Activated CD4-positive, alpha-beta T cell treated with anti-CD3 and anti-CD28 coated beads for 36 hours (primary cell): ENCODE measurements at regions of chr20 and their contacts with region 1.

Region 1: GRCh38 chr20:62302341-62303058 is at the start of gene ADRM1:
- DNase-seq: peak; percentile 98
- ATAC-seq: peak; percentile 83
- H3K4me3 Mint-ChIP-seq: peak within 1 kb of the TSS; percentile 91
- H3K27ac Mint-ChIP-seq: peak within 1 kb of the TSS; percentile 99
- H3K4me1 Mint-ChIP-seq: peaks cover 22% of the 10 kb centered on the region
- H3K27me3 Mint-ChIP-seq: no peaks in the 10 kb centered on the region
- total RNA-seq, gene ADRM1: 92.8 to 103 TPM

Region 2: DNA sequence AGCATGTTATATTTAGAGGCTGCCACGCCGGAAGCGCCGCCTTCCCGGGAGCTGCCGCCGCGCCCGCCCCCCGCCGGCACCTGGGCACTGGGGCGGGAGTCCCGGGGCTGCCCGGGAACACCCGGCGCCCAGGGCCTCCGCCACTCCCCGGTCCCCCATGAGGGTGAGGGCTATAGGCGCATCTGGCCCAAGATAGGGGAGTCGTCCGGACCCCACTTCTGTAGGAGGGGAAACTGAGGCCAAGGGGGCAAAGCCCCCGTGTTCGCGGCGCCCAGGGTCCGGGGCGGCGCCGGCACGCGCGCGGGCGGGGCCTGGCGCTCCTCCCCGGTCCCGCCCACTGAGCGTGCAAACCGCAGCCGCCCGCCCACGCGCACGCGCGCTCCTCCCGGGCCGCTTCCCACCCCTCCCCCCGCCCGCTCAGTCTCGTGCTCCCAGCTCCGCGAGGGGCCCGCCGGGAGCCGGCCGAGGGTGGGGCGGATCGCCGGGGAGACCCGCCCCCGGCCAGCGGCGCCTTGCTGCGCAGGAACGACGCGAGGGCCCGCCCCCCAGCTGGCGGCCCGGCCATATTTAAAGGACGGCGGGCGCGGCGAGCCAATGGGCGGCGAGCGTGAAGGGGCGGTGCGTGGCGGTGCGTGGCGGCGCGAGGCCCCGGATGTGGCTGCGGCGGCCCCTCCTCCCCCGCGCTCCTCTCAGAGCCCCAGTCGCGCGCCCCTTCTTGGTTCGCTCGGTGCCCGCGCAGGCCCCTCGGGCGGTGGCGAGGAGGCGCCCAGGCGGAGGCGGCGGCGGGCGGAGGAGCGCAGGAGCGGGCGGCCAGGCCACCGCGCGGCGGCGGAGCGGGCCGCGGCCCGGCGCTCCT is 180.5 kb before region 1 on chr20 and contains the start of gene LSM14B:
- CTCF ChIA-PET with region 1: no interaction called
- POLR2A ChIA-PET with region 1: no interaction called
- intact Hi-C with region 1: loop called in 1 of 2 experiments (anchors 1 kb)
- DNase-seq: peak; percentile 99
- ATAC-seq: peak; percentile 84
- H3K4me3 Mint-ChIP-seq: peak within 1 kb of the TSS; percentile 80
- H3K27ac Mint-ChIP-seq: peak within 1 kb of the TSS; percentile 91
- H3K4me1 Mint-ChIP-seq: peaks cover 54% of the 10 kb centered on the region
- H3K27me3 Mint-ChIP-seq: no peaks in the 10 kb centered on the region
- total RNA-seq, gene LSM14B: 38.7 TPM

Region 3: DNA sequence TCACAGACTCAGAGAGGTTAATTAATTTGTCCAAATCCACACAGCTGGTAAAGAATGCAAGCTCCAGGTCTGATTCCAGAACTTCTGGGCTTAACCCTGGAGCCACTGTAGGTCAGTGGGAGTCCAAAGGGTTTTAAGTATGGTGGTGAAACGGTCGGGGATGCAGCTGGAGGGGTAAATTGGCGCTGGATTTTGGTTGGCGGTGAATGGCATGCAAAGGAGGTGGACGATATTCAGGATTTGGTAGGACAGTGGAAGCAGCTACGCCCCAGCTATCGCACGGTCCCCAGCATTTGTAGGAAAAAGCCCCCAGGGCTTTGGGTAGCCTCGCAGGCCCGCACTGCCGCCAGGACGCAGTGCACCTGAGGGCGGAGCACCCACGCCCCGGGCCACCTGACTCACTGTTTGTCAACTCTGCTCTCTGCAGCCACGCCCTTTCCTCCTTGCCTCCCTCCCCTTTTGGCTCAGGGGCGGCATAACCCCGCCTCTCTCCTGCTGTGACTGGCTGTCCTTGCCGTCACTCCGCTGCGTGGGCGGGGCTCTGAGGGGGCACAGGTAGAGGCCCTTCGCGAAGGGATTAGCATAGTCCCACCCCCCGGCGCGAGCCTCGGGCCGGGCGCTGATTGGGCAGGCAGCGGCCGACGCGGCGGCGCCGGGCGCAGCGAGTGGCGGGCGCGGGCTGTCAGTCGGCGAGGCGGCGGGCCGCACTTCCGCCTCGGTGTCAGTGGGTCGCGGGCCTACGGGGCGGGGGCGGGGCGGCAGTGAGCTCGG is 64.5 kb before region 1 on chr20 and contains the start of gene OSBPL2:
- CTCF ChIA-PET with region 1: no interaction called
- POLR2A ChIA-PET with region 1: no interaction called
- intact Hi-C with region 1: loop called (anchors 1 kb)
- DNase-seq: peak; percentile 100
- ATAC-seq: peak; percentile 99
- H3K4me3 Mint-ChIP-seq: peak within 1 kb of the TSS; percentile 77
- H3K27ac Mint-ChIP-seq: peak within 1 kb of the TSS; percentile 74
- H3K4me1 Mint-ChIP-seq: peaks cover 34% of the 10 kb centered on the region
- H3K27me3 Mint-ChIP-seq: no peaks in the 10 kb centered on the region
- total RNA-seq, gene OSBPL2: 19.2 to 23.0 TPM

Region 4: GRCh38 chr20:62407221-62407992 is 104.9 kb after region 1 on chr20 and contains the start of gene CABLES2:
- CTCF ChIA-PET with region 1: interaction called, 3 read pairs
- POLR2A ChIA-PET with region 1: no interaction called
- intact Hi-C with region 1: loop called in 1 of 2 experiments (anchors 1 kb)
- DNase-seq: peak; percentile 96
- ATAC-seq: peak; percentile 93
- H3K4me3 Mint-ChIP-seq: peak within 1 kb of the TSS; percentile 72
- H3K27ac Mint-ChIP-seq: peak within 1 kb of the TSS; percentile 82
- H3K4me1 Mint-ChIP-seq: peaks cover 23% of the 10 kb centered on the region
- H3K27me3 Mint-ChIP-seq: peaks cover 2% of the 10 kb centered on the region
- total RNA-seq, gene CABLES2: 6.4 to 7.6 TPM

Region 5: GRCh38 chr20:62476056-62476838 is 173.7 kb after region 1 on chr20:
- CTCF ChIA-PET with region 1: no interaction called
- POLR2A ChIA-PET with region 1: no interaction called
- intact Hi-C with region 1: no loop called
- DNase-seq: peak; percentile 27
- ATAC-seq: peak; percentile 12
- H3K4me3 Mint-ChIP-seq: no peak overlapping the region
- H3K27ac Mint-ChIP-seq: no peak overlapping the region
- H3K4me1 Mint-ChIP-seq: no peaks in the 10 kb centered on the region
- H3K27me3 Mint-ChIP-seq: peaks cover 34% of the 10 kb centered on the region

Region 6: DNA sequence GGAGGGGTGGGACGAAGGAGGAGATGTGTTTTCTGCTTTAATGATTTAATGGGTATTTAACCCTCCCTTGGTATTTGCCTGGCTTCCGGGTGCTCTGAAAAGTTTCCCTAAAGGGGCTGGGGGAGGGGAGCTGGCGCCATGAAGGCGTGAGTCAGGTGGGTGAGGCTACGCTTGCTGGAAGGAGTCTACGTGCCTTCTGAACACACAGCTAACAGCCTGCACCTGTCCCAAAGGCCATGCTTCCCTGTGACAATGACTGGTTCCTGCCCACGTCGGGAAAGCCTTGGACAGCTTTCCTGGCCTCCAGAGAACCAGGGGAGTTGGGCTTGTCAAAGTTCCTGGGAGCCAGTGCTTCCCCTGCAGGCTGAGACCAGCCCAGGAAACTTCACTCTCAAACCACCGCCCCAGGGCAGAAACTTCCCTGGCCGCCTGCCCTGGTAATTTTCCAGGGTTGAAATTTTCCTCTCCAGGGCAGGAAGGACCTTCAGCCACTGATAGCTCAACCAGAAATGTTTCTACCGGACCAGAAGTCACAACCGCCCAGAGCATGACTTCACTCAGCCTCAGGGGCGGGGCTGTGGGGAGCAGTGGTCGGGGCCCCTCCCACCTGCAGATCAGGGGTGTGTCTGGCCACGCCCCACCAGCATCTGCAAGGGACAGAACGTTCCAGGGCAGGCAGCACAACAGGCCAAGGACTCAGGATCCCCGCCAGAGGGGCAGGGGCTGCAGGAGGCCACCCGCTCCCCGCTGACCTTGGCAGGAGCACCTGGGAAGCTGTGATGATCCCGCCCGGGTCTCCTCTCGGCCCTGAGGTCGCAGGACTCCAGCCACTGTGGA is 321.2 kb after region 1 on chr20:
- CTCF ChIA-PET with region 1: no interaction called
- POLR2A ChIA-PET with region 1: no interaction called
- intact Hi-C with region 1: loop called in 1 of 2 experiments (anchors 1 kb)
- DNase-seq: peak; percentile 97
- ATAC-seq: peak; percentile 91
- H3K4me3 Mint-ChIP-seq: peak overlapping the region; percentile 69
- H3K27ac Mint-ChIP-seq: peak overlapping the region; percentile 96
- H3K4me1 Mint-ChIP-seq: peaks cover 26% of the 10 kb centered on the region
- H3K27me3 Mint-ChIP-seq: no peaks in the 10 kb centered on the region

Region 7: GRCh38 chr20:62861726-62862336 is 559.3 kb after region 1 on chr20 and contains the start of gene TCFL5:
- CTCF ChIA-PET with region 1: no interaction called
- POLR2A ChIA-PET with region 1: no interaction called
- intact Hi-C with region 1: loop called in 1 of 2 experiments (anchors 2 kb)
- DNase-seq: peak; percentile 97
- ATAC-seq: peak; percentile 92
- H3K4me3 Mint-ChIP-seq: peak within 1 kb of the TSS; percentile 66
- H3K27ac Mint-ChIP-seq: peak within 1 kb of the TSS; percentile 42
- H3K4me1 Mint-ChIP-seq: peaks cover 28% of the 10 kb centered on the region
- H3K27me3 Mint-ChIP-seq: no peaks in the 10 kb centered on the region
- total RNA-seq, gene TCFL5: 5.2 to 6.6 TPM

Region 8: DNA sequence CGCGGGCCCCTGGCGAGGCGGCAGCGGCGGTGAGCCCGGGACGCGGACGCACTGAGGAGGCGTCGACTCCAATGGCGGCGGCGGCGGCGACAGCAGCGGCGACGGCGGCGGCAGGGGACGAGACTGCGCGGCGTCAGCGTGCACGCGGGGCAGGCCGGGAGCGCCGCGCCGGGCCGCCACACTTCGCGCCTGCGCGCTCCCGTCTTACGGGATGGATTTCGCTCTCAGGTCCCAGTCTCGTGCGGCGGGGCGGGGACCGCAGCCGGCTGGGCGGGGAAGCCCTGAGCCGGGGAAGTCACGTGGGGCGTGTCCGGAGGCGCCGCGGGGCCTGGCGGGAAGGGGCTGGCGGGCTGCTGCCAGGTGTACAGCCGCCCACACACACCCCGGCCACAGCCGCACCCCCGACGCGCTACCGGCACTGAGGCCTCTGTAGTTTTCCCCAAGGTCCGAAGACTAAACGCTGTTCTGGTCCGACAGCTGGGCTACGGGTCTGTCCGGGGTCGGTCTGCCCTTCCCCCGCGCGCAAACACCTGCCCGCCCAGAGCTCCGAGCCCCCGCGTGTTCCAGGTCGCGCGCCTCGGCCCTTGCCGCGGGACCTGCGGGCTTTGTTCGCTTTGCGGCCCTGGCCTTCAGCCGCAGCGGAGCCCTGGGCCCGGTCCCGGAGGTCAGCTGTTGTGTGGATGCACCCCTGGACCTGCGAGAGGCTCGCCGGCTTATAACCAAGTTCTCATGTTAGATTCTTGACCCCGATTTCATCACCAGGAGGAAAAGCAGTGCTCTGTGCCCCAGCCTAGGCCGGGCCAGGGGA is 913.7 kb after region 1 on chr20 and contains the start of gene YTHDF1:
- CTCF ChIA-PET with region 1: no interaction called
- POLR2A ChIA-PET with region 1: no interaction called
- intact Hi-C with region 1: loop called in 1 of 2 experiments (anchors 5 kb)
- DNase-seq: peak; percentile 98
- ATAC-seq: peak; percentile 98
- H3K4me3 Mint-ChIP-seq: peak within 1 kb of the TSS; percentile 92
- H3K27ac Mint-ChIP-seq: peak within 1 kb of the TSS; percentile 88
- H3K4me1 Mint-ChIP-seq: peaks cover 43% of the 10 kb centered on the region
- H3K27me3 Mint-ChIP-seq: peaks cover 4% of the 10 kb centered on the region
- total RNA-seq, gene YTHDF1: 32.2 to 32.6 TPM